RWPE1 (cell line): ENCODE measurements at regions of chr12 and their contacts with region 1.

Region 1: DNA sequence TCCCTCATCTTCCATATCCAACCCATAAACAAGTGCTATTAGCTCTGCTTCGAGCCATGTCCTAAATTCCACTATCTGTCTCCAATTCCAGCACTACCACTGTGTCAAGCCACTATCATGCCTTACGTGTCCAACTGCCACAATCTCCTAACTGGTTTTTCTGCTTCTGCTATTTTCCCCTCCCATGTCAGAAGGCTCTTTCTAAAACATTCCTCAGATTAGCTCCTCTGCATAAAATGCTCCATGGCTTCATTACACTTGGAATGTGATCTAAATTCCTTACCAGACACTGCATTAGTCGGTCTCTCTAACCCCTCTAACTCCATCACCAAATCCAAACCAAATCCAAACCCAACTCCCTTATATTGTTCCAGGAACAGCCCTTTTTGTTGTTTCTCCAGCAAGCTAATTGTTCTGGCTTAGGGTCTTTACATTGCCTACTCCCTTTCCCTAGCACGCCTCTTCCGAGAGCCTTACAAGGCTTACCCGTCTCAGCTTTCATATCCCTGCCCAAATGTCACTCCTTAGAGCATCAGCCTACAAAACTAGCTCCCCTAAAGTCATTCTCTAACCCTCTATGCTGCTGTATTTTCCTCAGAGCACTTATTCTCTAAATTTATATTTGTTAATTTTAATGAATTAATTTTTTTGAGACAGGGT is 139.7 kb downstream of the HELB start:
- DNase-seq: no peak
- H3K27ac ChIP-seq: no peak overlapping the region
- CTCF ChIP-seq: no peak

Region 2: DNA sequence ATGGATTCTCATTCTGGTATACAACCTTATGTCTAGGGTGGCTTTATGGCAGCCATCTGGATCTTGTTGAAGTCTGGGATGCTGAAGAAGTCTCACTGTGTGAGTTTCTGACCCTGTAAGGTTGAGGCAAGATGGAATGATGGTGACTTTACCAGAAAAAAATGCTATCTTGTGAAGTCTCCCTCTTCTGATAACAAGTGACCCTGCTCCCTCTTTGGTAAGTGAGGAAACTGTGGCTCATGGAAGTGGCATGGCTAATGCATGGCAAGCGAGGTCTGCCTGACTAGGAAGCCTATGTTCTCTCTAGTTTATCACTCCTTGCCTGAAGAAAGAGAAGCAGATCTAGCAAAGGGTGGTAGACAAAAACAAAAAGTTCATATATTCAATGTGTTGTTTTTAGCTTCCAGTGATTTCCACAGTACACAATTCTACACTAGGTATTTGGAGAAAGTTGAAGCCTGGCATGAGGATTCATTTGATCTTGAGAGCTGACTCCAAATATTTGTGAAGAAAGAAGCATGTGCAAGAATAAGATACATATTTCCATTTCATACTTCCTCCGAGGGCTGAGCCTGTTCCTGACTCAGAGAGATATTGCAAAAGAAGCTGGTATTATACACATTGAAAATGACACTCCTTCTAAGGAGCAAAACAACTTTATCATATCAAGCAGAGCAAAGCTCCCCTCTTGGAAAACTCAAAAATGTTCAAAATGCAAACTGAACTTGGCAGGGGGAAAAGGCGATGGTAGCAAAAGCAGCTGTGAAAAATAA is 76.1 kb before region 1 on chr12:
- CTCF ChIA-PET with region 1: no interaction called
- POLR2A ChIA-PET with region 1: interaction called, 12 read pairs
- DNase-seq: no peak
- H3K27ac ChIP-seq: no peak overlapping the region
- CTCF ChIP-seq: no peak

Region 3: GRCh38 chr12:66423266-66423665 is 18.8 kb before region 1 on chr12:
- CTCF ChIA-PET with region 1: no interaction called
- POLR2A ChIA-PET with region 1: no interaction called
- DNase-seq: no peak
- H3K27ac ChIP-seq: no peak overlapping the region
- CTCF ChIP-seq: no peak

Region 4: GRCh38 chr12:66584673-66585072 is 142.6 kb after region 1 on chr12:
- CTCF ChIA-PET with region 1: no interaction called
- POLR2A ChIA-PET with region 1: no interaction called
- DNase-seq: peak; percentile 13
- H3K27ac ChIP-seq: no peak overlapping the region
- CTCF ChIP-seq: no peak